Colonic mucosa (tissue), 4 donors: ENCODE measurements at regions of chr17 and their contacts with region 1.

Region 1: DNA sequence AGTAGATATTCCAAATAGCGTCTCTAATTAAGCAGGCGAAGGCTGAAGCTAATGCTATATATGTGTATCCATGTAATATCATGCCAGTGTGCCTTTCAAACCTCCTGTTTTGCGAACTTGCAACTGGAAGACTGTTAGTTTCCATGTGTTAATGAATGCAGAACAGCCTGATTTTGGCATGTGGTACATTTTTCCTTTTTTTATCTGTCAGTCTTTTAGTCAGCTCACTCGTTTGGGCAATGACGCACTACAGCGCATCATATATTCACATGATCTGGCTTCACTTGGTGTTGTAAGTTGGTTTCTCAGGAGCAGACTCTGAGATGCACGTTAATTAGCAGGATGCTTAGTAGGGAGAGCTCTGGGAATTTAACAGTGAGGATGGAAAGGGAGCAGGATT is 210.4 kb upstream of the CA10 start:
- DNase-seq: no peak
- H3K4me3 ChIP-seq: no peak overlapping the region
- H3K27ac ChIP-seq: no peak overlapping the region
- H3K4me1 ChIP-seq: no peaks in the 10 kb centered on the region
- H3K27me3 ChIP-seq: no peaks in the 10 kb centered on the region
- CTCF ChIP-seq: no peak

Region 2: DNA sequence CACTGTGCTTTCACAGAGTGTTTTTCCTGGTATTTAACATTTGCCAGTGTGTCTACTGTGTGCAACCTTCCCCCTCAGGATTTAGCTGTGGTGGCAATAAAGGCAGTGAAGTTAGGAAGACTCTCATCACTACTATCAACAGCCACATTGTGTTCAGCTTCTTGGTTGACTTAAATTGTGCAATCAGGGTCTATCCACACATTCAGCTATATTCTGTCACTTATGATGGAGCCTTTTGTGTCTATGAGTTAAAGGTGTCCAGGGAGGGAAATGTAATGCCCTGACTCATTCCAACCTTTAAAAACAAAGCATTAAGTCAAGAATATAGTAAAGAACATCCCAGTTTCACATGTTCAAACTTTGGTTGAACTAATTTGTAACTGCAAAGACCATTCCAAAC is 386.7 kb before region 1 on chr17:
- intact Hi-C with region 1: loop called (anchors 10 kb)
- DNase-seq: no peak
- H3K4me3 ChIP-seq: no peak overlapping the region
- H3K27ac ChIP-seq: no peak overlapping the region
- H3K4me1 ChIP-seq: no peaks in the 10 kb centered on the region
- H3K27me3 ChIP-seq: no peaks in the 10 kb centered on the region
- CTCF ChIP-seq: no peak